ENCODE measurements at regions of chr22 and their contacts with region 1.

Region 1: DNA sequence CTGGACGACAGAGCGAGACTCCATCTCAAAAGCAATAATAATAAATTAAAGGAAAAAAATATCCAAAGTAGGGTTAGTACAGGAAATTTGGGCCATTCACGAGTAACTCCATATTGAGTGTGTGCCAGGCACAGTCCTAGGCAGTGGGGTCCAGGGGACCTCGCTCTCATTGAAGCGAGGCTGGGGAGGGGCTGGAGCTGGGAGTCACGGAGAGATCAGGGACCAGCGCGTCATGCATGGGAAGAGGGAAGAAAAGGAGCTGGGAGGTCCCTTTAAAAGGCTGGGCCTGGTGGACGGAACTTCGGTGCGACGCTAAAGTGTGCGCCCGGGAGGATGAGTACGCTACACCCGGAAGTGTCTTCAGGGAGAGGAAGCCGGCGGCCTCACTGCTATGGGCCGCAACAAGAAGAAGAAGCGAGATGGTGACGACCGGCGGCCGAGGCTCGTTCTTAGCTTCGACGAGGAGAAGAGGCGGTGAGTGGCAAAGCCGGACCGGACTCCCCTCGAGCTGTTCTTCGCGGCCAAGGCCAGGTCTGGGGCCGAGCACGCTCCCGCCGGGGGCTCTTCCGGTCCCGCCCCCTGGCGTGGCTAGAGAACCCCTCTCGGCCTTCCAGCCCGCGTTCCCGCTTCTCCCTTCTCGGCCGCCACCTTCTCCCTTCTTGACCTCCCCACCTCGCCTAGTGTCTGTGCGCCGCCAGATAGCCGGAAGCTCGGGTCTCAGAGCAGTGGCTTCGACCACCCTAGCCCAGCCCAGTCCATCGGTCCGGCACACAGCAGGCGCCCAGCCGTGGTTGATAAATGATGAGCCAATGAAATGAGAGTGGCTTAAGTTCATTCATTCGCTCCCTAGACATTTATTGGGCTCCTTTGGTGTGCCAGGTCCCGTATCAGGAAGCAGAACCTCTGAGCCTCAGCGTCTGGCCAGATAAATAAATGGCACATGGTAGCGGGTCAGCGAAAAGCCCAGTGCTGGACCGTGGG is at the start of gene NOL12:
- DNase-seq: no peak
- H3K4me3 ChIP-seq: peak within 1 kb of the TSS; percentile 97
- H3K27ac ChIP-seq: peak within 1 kb of the TSS; percentile 83
- H3K27me3 ChIP-seq: no peaks in the 10 kb centered on the region
- CTCF ChIP-seq: no peak
- polyA plus RNA-seq, gene NOL12: 10.4 and 11.8 TPM in 2 replicates

Region 2: DNA sequence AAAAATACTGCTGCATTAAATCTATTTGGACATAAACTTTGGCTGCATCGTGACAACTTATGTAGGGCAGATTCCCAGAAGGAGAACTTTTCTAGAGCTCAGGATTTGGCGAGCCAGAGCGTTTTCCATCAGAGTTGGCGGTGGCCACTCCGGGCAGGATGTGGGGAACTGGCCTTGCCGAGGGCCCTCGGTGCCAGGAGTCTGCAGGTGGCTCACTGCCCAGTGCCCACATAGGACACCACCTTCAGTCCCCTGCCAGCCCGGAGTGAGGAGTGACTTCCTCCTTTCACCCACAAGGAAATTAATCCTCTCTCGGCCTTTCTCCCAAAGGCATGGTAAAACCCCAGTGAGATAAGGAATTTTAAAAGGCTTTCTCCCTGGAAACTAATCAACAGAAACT is 104.8 kb before region 1 on chr22:
- CTCF ChIA-PET with region 1: no interaction called
- POLR2A ChIA-PET with region 1: no interaction called
- DNase-seq: no peak
- H3K4me3 ChIP-seq: no peak overlapping the region
- H3K27ac ChIP-seq: no peak overlapping the region
- H3K27me3 ChIP-seq: peaks cover 21% of the 10 kb centered on the region
- CTCF ChIP-seq: no peak

Region 3: DNA sequence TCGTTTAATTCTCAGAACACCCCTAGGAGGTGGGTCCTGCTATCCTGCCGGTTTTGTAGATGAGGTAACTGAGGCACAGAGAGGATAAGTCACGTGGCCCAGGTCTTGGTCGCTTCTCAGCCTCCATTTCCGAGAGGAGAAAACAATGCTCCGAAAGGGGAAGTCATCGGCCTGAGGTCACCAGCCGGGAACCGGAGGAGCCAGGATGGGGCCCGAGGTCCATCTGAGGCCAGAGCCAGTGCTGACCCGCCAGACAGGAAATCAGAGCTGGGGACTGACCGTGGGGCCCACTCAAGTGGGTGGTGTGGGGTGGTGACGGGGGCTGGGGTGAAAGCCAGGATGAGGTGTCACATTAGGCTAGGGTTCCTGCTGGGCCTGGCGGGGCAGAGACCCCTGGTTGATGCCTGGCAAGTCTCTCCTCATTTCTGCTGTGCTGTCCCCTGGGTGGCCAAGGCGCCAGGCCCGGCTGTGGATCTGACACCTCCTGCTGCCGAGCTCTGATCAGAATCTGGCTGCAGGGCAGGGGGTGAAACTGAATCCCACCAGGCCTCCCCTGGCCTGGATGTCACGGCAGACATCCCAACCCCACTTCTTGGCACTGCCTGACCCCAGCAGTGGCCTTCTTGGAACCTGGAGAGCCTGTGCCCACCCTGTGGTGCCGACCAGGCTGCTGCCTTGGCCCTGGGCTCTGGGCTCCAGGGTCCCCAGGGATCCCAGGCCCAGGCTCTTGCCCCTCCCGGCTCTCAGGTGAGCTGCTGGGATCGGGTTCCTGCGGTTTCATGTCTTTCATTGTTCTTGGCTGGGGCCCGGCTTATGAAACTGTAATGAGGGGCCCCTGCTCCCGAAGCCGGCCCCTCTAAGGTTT is 22.5 kb after region 1 on chr22:
- CTCF ChIA-PET with region 1: no interaction called
- POLR2A ChIA-PET with region 1: no interaction called
- DNase-seq: no peak
- H3K4me3 ChIP-seq: no peak overlapping the region
- H3K27ac ChIP-seq: no peak overlapping the region
- H3K27me3 ChIP-seq: no peaks in the 10 kb centered on the region
- CTCF ChIP-seq: no peak

Region 4: GRCh38 chr22:37749831-37750277 is 63.6 kb after region 1 on chr22:
- CTCF ChIA-PET with region 1: no interaction called
- POLR2A ChIA-PET with region 1: interaction called, 10 read pairs
- DNase-seq: no peak
- H3K4me3 ChIP-seq: no peak overlapping the region; the same call in 1 of the 2 replicates
- H3K27ac ChIP-seq: peak overlapping the region; percentile 47
- H3K27me3 ChIP-seq: no peaks in the 10 kb centered on the region
- CTCF ChIP-seq: no peak

Region 5: GRCh38 chr22:37802310-37803194 is 116.3 kb after region 1 on chr22:
- CTCF ChIA-PET with region 1: no interaction called
- POLR2A ChIA-PET with region 1: interaction called, 10 read pairs
- DNase-seq: no peak
- H3K4me3 ChIP-seq: peak overlapping the region; percentile 60
- H3K27ac ChIP-seq: no peak overlapping the region
- H3K27me3 ChIP-seq: no peaks in the 10 kb centered on the region
- CTCF ChIP-seq: no peak